SK-N-SH (cell line): ENCODE measurements at regions of chr15 and their contacts with region 1.

Region 1: DNA sequence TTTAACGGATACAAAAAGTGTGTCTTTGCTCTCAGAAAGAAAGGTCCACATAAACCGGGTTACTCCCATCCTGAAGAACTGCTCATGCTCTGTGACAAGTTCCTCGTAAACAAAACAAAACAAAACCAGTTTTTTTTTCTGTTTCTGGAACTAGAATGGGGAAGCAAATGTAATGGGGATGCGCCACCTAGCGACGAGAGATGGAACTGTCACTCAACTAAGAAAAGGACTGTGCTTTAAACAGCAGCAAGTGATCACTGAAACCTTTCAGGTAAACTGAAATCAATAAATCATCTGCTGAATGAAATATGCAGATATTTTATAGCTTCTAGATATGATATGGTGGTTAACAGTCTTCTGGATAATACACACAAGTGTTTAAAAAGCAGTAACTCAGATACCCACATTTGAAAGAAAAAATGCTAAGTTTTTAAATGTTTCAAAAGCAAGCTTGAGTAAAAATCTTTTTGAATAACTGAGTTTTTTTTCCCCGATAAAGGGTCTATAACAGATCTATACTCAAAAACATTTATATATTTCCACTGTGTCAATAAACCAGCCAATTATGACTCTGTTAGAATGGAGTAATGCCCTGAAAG is 10.9 kb downstream of the TM2D3 start:
- DNase-seq: peak; percentile 58
- H3K4me3 ChIP-seq: peak overlapping the region in 1 of 2 experiments; percentile 31; a peak in 1 of 4 replicates
- H3K27ac ChIP-seq: peak overlapping the region; percentile 30 to 81; a peak in 3 of 4 replicates
- H3K4me1 ChIP-seq: peaks cover 14 to 16% of the 10 kb centered on the region in 2 experiments; a peak in 3 of 4 replicates
- H3K27me3 ChIP-seq: no peaks in the 10 kb centered on the region
- CTCF ChIP-seq: peak; percentile 95
- EP300 ChIP-seq: no peak
- RAD21 ChIP-seq: peak; percentile 88

Region 2: DNA sequence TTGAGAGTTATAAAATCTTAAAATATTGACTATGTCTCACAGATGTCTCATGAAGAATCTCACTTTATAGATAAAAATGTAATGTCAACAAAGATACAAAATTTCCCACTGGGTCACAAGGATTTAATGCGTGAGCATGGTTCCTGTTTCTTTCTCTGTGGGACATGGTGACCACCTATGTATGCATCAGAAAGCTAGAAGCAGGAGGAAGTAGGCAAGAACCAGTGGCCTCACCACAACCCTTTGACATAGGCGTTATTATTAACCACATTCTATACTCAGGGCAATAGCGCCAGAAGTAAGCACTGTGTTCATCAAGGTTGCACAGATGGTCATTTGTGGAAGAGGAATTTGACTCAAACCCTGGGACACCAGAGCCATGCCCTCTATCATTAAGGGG is 1287.8 kb before region 1 on chr15:
- CTCF ChIA-PET with region 1: no interaction called
- POLR2A ChIA-PET with region 1: no interaction called
- DNase-seq: no peak
- H3K4me3 ChIP-seq: no peak overlapping the region
- H3K27ac ChIP-seq: no peak overlapping the region
- H3K4me1 ChIP-seq: peaks cover 0 to 3% of the 10 kb centered on the region in 2 experiments; a peak in 1 of 4 replicates
- H3K27me3 ChIP-seq: no peaks in the 10 kb centered on the region
- CTCF ChIP-seq: no peak
- EP300 ChIP-seq: no peak
- RAD21 ChIP-seq: no peak

Region 3: DNA sequence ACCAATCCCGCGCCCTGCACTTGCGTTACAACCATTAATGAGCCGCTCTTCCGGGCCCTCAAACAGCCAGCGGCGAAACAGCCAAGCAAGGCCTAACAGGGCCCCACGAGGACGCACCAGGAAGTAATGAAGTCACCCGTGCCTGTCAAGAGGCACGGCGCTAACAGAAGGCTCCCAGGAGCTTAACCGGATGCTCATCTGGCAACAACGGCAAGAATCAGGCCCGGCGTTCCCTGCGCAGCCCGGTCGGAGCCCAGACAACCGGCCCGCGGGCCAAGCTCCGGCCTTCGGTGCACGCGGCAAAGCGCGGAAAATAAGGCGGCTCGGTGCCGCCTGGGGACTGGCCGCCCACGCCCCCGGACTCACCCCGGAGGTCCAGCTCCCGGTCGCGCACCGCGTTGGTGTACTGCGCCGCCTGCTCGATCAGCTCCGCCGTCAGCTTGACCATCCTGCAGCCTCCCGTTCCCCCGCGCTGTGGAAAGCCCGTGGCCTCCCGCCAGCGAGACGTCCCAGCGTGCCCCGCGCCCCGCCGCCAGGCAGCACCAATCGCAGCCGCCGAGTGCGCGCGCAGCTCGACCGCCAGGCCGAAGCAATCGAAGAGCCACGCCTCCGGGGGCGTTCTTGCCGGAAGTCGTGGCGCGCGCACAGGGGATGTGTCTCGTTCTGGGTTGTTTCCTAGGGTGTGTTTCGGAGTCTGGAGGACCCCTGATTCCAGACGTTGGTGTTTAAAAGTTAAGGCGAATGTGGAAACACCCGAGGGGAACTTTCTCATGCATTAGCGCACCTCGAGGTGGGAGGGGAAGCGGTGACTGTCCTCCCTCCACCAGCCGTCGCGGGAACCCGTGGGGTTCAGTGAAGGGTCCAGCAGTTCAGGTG is 346.3 kb before region 1 on chr15 and contains the start of gene SNRPA1:
- CTCF ChIA-PET with region 1: interaction called, 139 read pairs
- POLR2A ChIA-PET with region 1: interaction called, 3 read pairs
- DNase-seq: peak; percentile 99
- H3K4me3 ChIP-seq: peak within 1 kb of the TSS; percentile 82 to 98
- H3K27ac ChIP-seq: peak within 1 kb of the TSS; percentile 87 to 94
- H3K4me1 ChIP-seq: peaks cover 8 to 12% of the 10 kb centered on the region in 2 experiments; a peak in 2 of 4 replicates
- H3K27me3 ChIP-seq: no peaks in the 10 kb centered on the region
- CTCF ChIP-seq: no peak
- EP300 ChIP-seq: 0 out of 4 replicates have a peak, but pooled peaks of 1 of the 2 experiments have one; percentile 18
- RAD21 ChIP-seq: no peak
- polyA plus RNA-seq, gene SNRPA1: 59.9 and 62.3 TPM in 2 replicates

Region 4: GRCh38 chr15:101320501-101321052 is 320.7 kb before region 1 on chr15:
- CTCF ChIA-PET with region 1: interaction called, 18 read pairs
- POLR2A ChIA-PET with region 1: no interaction called
- DNase-seq: no peak
- H3K4me3 ChIP-seq: no peak overlapping the region
- H3K27ac ChIP-seq: no peak overlapping the region
- H3K4me1 ChIP-seq: peaks cover 0 to 14% of the 10 kb centered on the region in 2 experiments; a peak in 1 of 4 replicates
- H3K27me3 ChIP-seq: no peaks in the 10 kb centered on the region; the same call in 1 of the 2 replicates
- CTCF ChIP-seq: no peak
- EP300 ChIP-seq: no peak
- RAD21 ChIP-seq: no peak

Region 5: GRCh38 chr15:101620671-101621070 is 20.6 kb before region 1 on chr15:
- CTCF ChIA-PET with region 1: interaction called, 18 read pairs
- POLR2A ChIA-PET with region 1: no interaction called
- DNase-seq: no peak
- H3K4me3 ChIP-seq: no peak overlapping the region
- H3K27ac ChIP-seq: no peak overlapping the region; a peak in 1 of 4 replicates
- H3K4me1 ChIP-seq: peaks cover 0 to 38% of the 10 kb centered on the region in 2 experiments; a peak in 1 of 4 replicates
- H3K27me3 ChIP-seq: no peaks in the 10 kb centered on the region
- CTCF ChIP-seq: no peak
- EP300 ChIP-seq: no peak
- RAD21 ChIP-seq: no peak

Region 6: GRCh38 chr15:101679806-101680205 is 38.5 kb after region 1 on chr15:
- CTCF ChIA-PET with region 1: no interaction called
- POLR2A ChIA-PET with region 1: no interaction called
- DNase-seq: no peak
- H3K4me3 ChIP-seq: no peak overlapping the region
- H3K27ac ChIP-seq: peak overlapping the region in 1 of 2 experiments; percentile 11; a peak in 1 of 4 replicates
- H3K4me1 ChIP-seq: peaks cover 3 to 9% of the 10 kb centered on the region in 2 experiments
- H3K27me3 ChIP-seq: no peaks in the 10 kb centered on the region
- CTCF ChIP-seq: no peak
- EP300 ChIP-seq: no peak
- RAD21 ChIP-seq: no peak